Posterior vena cava (tissue), 2 donors: ENCODE measurements at regions of chr3 and their contacts with region 1.

Region 1: DNA sequence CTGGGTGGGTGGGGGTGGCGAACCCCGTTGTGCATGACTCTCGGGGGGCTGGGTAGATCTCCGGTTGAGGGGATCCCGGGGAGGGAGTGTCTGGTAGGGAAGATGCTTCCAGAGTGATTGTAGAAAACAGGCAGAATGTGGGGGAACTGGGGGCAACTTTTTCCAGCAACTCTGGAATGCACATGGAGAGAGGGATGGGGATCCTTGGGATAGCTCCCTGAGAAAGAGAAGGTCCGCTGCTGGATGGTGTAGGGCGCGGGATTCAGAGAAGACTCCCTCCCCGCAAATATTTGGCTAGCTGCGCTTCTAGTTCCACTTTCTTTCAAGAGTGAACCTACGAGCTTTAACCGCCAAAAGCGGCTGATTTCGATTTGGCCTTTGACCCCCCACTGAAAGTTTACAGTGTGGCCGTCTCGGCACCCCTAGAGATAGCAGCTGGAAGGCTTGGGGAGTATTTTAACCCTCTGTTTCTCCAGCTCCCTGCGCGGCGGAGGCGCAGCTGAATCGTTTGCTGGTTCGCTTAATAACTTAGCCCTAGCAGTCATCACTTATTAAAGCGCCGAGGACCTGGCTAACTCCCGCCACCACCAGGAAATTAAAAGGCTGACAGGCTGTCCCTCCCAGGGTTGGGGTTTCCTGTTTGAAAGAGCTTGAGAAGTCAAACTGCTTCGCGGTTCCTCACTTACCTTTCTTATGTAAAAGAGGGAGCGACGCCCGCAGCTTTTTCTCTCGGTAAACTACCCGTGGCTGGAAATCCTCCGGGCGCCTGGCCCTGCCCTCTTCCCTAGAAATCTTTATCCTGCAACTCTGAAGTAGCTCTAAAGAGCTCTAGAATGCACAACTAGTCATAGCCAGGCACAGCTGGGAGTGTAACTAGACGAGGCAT is 1.2 kb downstream of the PHLDB2 start:
- DNase-seq: peak; percentile 92

Region 2: DNA sequence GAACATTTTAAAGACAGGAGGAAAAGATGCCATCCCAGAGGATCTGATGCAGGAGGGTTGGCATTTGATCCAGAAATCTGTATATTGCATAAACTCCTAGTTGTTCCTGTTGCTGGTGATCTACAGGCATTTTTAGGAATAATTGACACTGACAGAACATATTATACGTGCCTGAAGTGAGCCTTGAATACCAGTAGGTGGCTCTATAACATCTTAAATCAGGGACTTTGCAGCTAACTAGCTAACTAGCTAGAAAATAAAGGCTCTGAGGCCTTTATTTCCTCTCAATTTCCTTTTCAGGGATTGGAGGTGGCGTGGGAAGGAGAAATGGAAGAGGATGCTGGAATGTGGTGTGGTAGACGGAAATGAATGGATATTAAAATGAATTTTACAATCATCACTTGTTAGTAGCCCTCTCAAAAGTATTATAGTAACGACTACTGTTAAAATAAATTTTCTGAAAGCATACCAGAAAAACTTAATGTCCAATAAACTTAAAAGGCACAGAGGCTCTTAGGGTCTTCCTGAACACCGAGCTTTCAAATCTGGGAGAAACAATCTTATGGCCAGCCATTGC is 191.2 kb before region 1 on chr3:
- intact Hi-C with region 1: no loop called
- DNase-seq: no peak

Region 3: GRCh38 chr3:111723293-111724215 is 136.7 kb before region 1 on chr3:
- intact Hi-C with region 1: loop called (anchors 5 kb)
- DNase-seq: no peak

Region 4: DNA sequence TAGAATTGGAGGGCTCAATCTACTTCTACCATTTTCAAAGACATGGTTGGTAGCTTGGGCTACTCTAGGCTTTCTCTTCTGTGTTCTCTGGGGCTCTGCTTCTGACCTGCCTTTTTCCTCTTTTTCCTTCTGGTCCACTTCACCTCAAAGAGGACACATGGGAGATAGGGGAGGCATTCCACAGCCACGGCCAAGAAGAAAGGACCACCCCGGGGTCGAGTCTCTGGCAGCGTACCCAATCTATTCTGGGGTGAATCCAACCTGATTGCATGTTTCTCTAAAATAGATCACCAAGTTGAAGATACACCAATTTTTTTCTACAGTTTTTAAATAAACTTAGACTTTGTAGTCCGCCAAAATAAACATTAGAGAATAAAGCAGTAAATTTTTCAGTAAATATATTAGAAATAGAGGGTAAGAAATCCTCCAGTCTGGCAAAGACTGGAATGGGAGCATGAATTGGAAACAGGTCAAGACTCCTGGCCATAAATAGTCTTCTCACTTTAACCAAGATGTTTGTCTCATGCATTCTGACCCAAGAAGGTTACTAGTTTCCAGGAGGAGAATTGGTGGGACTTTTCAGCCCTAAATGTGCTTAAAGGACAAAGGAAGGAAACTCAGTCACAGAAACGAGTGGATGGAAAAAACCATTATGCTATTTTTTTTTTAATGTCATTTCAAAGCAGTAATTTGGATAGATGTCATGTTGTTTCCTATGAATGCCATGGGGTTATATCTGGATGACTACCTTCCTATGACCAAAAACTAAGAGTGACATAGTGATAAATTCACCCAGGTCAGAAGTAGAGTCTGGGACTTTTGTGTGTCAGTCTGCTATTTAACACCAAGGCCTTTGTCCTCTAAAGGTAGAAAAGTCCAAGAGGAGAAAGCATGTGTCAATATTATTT is 72.4 kb before region 1 on chr3:
- intact Hi-C with region 1: loop called in 1 of 2 experiments (anchors 5 kb)
- DNase-seq: no peak

Region 5: DNA sequence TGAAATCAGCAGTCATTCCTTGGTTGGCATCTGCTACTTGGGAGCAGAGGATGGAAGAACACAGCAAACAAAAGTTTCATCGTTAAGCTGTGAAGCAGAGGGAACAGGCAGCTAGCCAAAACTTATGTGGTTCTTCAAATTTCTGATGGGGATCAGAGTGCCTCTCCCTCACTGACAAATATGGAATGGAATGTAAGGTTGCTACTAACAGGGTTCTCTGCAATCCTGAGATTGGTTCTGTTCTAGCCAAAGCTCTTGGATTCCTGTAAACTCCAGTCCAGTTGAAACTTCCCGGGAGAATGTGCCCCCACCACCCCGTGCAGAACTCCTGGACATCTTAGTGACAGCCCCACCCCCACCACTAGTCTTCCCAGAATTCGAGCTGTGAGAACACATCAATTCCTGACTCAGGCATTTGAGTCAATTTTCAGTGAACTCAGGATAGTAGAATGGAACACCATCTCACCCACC is 57.1 kb before region 1 on chr3:
- intact Hi-C with region 1: loop called in 1 of 2 experiments (anchors 5 kb)
- DNase-seq: peak; percentile 93

Region 6: DNA sequence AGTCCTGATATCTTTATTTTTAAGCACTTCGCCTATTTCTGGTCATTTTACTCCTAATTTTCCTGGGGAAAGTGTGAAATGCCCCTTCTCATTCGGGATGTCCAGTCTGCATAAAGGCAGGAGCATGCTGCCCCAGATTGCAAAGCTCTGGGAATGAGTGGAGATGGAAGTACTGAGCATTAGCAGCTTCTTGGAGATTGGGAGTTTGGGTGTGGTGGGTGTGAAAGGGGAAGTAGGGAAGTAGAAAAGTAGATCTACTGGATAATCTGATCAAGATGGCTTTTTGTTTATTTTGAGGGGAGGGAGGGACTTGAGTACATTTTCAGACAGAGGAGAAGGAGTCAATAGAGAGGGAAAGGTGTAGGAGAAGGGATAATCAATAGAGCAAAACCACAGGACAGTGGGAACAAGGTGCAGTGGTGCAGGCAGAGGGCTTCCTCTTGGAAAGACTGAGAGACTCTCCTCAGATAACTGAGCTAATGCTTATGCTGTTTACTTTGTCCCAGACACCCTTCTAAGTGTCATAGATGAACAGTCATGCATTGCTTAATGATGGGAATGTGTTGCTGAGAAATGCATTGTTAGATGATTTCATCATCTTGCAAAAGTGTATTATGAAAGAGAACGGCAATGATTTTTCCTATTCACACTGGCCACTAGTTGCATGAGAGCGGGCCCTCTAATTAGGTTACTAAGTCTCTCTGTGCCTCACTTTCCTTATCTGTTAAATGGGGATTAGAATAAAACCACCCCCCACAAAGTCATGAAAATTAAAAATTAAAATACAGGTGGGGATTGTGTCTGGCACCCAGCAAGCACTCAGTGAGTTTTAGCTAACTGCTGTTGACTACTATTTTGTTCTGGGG is 44.4 kb after region 1 on chr3:
- intact Hi-C with region 1: loop called in 1 of 2 experiments (anchors 5 kb)
- DNase-seq: no peak

Region 7: DNA sequence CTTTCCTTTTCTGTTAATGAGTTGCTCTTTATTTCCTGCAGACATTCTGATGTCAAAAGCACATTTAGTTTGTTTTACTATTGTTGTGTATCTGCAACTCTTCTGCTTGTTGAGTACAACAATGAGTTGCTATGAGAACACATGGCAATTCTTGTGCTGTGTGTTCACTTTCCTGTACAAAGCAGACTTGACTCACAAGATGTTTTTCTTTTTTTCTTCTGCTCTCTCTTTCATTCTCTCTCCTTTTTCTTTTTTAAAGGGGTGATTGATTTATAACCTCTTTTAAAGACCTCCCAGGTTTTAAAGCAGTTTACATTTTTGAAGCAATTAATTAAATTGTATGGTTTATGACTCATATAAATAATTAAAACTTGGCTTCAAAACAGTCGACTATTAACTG is 87.0 kb after region 1 on chr3:
- intact Hi-C with region 1: loop called in 1 of 2 experiments (anchors 10 kb)
- DNase-seq: no peak